Left cardiac atrium (tissue), 4 donors: ENCODE measurements at regions of chr15 and their contacts with region 1.

Region 1: GRCh38 chr15:55074431-55074830 is 122.3 kb downstream of the RSL24D1 start:
- DNase-seq: no peak
- ATAC-seq: no peak

Region 2: GRCh38 chr15:55016226-55016625 is 58.2 kb before region 1 on chr15:
- intact Hi-C with region 1: loop called in 1 of 2 experiments (anchors 10 kb)
- DNase-seq: no peak
- ATAC-seq: no peak

Region 3: GRCh38 chr15:55133972-55134371 is 59.5 kb after region 1 on chr15:
- intact Hi-C with region 1: no loop called
- DNase-seq: no peak
- ATAC-seq: no peak

Region 4: DNA sequence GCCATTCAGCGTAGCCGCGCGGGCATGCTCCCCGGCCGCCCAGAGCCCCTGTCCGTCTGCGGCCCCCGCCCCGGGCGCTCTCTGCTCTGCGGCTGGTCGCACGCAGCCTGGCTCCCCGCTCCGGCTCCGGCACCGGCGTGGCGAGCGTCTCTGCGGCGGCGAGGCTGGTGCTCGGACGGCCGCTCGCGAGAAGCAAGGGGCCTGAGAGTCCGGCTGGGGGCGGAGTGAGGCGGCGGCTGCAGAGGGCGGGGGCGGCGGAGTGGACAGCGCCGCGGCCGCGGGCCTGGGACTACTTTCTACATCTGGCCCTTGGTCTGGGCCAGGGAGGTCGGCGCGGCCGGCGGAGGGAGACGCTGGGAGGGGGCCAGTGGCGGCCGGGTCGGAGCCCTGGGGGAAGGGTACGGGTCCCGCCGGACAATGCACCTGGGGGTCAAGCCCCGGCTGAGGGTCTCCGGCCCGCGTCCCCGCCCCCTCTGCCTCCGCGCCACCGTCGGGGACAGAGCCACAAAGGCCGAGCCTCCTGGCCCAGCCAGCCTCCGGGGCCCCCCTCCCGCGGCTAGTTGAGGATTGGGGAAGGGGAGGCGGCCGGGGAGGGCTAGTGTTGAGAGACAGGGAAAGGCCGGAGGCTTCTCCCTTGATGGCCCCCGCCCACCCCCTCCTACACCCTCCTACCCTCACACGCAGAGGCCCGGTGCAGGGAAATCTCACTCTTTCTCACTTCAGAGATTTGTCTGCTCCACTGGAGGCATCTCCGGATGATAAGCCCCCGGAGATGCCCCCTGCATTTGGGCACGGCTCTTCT is 668.7 kb after region 1 on chr15 and contains the start of gene PRTG:
- intact Hi-C with region 1: no loop called
- DNase-seq: peak; percentile 80
- ATAC-seq: peak; percentile 96 to 97
- total RNA-seq, gene PRTG: 1.1 to 1.3 TPM